WTC11 (cell line): ENCODE measurements at regions of chr11 and their contacts with region 1.

Region 1: DNA sequence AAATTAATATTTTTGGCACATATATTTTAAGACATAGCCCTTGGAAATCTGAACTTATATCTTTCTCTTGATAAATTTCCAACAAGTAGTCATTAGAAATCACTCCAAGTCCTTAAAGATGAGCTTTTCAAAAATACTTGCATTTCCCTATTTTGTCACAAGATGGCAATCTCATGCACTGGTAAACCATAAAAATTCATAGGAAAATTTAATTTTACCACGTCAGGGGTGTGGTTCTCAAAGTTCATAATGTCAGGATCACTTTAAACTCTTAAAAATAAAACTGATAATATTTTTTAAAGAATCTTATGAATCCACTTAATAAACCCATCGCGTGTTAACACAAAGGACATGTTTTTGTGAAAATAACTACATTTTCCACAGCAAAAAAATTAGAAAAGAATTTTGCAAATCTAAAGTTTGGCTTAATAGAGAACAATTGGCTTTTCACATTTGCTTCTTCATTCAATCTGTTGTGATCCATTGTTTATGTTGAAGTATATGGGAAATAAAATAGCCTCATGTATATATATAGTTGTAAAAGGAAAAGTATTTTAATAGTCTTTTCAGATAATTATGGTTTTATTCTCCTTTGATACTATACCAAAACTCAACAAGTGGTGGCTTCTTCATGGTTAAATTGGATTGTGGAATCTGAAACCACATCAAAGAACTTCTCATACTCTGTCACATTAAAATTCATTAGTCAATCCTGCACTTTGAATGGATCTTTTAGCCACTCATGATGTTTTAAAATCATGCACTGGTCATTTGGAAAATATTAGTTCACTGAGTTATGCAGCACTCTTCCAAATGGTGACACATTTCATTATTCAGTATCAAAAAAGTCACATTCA is 169.1 kb downstream of the CADM1 start:
- DNase-seq: no peak
- ATAC-seq: no peak
- H3K4me3 Mint-ChIP-seq: no peak overlapping the region
- H3K27ac Mint-ChIP-seq: no peak overlapping the region
- H3K4me1 Mint-ChIP-seq: no peaks in the 10 kb centered on the region
- H3K27me3 Mint-ChIP-seq: no peaks in the 10 kb centered on the region
- CTCF ChIP-seq: peak; percentile 41

Region 2: DNA sequence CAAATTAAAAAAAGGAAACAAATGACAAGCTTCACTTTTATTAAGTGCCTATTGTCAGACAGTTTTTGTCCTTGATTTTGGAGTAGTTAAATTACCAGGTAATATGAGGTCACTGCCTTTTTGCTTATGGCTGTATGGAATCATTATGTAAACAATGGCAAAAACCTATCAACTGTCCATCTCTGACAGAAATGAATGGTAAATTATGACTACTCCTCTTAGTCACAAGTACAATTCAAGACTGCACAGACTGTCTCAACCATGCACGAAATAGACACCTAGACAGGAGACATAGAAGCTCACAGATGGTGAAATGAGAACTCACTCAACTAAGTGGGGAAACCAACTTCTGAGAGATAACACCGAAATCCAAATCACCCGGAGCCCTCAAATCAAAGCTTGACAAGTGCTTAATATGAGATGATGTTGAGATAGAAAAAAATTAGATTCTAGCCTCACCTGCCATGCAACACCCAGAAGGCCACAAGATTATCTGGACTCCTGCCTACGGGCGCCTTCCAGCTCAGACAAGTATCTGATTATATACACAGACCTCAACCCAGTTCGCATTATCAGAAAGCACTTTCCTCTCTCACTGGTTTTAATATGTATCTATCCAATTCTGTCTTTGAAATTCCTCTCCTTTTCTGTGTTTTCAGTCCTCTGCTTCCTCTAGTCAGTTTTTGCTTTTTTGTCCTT is 30.2 kb before region 1 on chr11:
- CTCF ChIA-PET with region 1: no interaction called
- POLR2A ChIA-PET with region 1: no interaction called
- DNase-seq: no peak
- ATAC-seq: no peak
- H3K4me3 Mint-ChIP-seq: no peak overlapping the region
- H3K27ac Mint-ChIP-seq: no peak overlapping the region
- H3K4me1 Mint-ChIP-seq: no peaks in the 10 kb centered on the region
- H3K27me3 Mint-ChIP-seq: no peaks in the 10 kb centered on the region
- CTCF ChIP-seq: no peak

Region 3: DNA sequence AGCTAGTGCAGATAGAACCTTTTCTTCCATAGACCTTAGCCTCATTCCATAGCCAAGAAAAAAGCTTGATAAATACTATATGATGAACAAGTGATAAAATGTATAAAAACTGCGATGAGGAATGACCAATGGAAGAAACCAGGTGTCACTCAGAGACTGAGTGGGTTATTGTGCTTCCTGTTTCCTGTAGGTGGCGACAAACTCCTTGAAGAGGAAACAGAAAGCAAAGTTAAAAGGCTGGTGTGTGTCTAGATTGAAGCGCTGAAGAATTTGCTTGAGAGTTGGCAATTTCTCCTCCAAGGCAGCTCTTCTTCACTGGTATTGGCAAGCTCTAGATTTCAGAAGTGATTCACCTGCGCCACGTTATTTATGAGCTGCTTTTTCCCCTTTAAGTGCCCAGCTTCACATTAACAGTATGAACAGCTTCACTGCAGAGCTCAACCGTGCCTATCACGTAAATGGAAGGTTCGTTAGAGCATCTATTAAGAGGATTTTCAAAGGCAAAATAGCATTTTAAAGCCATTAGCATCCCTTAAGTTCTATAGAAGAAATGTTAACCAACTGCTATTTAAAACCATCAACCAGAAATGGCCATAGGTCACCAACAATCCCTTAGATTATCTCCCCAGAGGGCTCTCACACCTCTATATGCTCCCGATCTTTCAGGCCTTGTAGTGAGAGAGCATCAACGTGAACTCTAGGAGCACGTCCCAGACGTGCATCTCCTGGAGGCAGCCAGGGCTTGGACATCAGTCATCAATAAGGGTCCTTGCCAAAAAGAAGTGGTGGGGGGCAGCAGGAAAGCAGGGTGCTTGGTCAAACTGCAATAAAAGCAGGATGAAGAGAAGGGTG is 10.4 kb before region 1 on chr11:
- CTCF ChIA-PET with region 1: interaction called, 10 read pairs
- POLR2A ChIA-PET with region 1: no interaction called
- DNase-seq: peak; percentile 13
- ATAC-seq: peak; percentile 87
- H3K4me3 Mint-ChIP-seq: no peak overlapping the region
- H3K27ac Mint-ChIP-seq: no peak overlapping the region
- H3K4me1 Mint-ChIP-seq: peaks cover 6% of the 10 kb centered on the region
- H3K27me3 Mint-ChIP-seq: no peaks in the 10 kb centered on the region
- CTCF ChIP-seq: peak; percentile 62; the same call in 1 of the 2 replicates

Region 4: DNA sequence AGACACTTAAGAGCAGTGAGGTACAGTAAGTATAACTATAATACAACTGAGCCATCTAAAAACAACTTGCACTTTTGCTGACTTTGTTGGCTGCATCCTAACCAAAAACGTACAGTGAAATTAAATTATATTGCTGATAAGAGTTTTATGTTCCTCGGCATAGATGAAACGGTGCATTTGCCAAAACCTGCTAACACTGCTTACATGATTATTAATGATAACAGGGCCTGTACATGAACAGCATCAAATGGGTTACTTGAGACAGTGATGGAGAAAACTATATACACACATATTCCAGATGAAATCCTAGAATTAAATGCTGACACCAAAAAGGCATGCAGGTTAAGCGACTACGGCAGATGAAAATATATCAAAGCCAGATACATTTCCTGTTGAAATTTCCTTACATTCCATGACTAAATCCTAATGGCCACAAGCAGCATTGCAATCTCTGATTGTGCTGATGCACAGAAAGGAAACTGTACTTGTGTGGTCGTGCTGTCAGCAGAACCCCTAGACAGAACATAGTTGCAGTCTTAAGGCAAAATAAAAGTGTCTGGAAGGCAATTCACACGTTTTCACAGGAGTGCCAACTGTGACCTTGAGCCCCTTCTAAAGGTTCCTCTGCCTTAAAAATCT is 25.1 kb after region 1 on chr11:
- CTCF ChIA-PET with region 1: no interaction called
- POLR2A ChIA-PET with region 1: no interaction called
- DNase-seq: no peak
- ATAC-seq: no peak
- H3K4me3 Mint-ChIP-seq: no peak overlapping the region
- H3K27ac Mint-ChIP-seq: no peak overlapping the region
- H3K4me1 Mint-ChIP-seq: no peaks in the 10 kb centered on the region
- H3K27me3 Mint-ChIP-seq: no peaks in the 10 kb centered on the region
- CTCF ChIP-seq: no peak

Region 5: GRCh38 chr11:115476463-115477286 is 141.5 kb after region 1 on chr11:
- CTCF ChIA-PET with region 1: no interaction called
- POLR2A ChIA-PET with region 1: no interaction called
- DNase-seq: no peak
- ATAC-seq: peak; percentile 81
- H3K4me3 Mint-ChIP-seq: peak overlapping the region; percentile 6; the same call in 1 of the 2 replicates
- H3K27ac Mint-ChIP-seq: no peak overlapping the region
- H3K4me1 Mint-ChIP-seq: peaks cover 27% of the 10 kb centered on the region
- H3K27me3 Mint-ChIP-seq: peaks cover 52% of the 10 kb centered on the region
- CTCF ChIP-seq: no peak

Region 6: DNA sequence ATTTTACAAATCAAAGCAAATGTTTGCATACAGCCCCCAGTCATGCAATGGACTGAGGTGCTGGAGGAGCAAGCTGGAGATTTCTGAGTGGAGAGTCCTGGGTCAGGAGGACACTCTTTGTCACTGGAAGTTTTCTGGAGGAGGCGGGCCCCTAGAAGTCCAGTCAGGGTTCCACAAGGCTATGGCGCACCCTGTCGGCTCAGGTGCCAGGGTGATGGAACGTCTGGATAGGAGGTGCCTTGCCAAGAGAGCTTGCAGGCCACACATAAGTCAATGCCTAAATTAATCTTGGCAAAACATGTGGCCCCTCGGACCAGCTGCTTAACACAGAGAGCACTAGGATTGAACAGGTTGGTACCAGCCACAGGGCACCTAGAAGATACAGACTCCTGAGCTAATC is 343.8 kb after region 1 on chr11:
- CTCF ChIA-PET with region 1: interaction called, 10 read pairs
- POLR2A ChIA-PET with region 1: no interaction called
- DNase-seq: peak; percentile 71
- ATAC-seq: peak; percentile 86
- H3K4me3 Mint-ChIP-seq: no peak overlapping the region
- H3K27ac Mint-ChIP-seq: no peak overlapping the region
- H3K4me1 Mint-ChIP-seq: peaks cover 14% of the 10 kb centered on the region
- H3K27me3 Mint-ChIP-seq: no peaks in the 10 kb centered on the region; the same call in 1 of the 2 replicates
- CTCF ChIP-seq: no peak